Activated CD4-positive, alpha-beta T cell treated with anti-CD3 and anti-CD28 coated beads for 36 hours (primary cell): ENCODE measurements at regions of chr5 and their contacts with region 1.

Region 1: DNA sequence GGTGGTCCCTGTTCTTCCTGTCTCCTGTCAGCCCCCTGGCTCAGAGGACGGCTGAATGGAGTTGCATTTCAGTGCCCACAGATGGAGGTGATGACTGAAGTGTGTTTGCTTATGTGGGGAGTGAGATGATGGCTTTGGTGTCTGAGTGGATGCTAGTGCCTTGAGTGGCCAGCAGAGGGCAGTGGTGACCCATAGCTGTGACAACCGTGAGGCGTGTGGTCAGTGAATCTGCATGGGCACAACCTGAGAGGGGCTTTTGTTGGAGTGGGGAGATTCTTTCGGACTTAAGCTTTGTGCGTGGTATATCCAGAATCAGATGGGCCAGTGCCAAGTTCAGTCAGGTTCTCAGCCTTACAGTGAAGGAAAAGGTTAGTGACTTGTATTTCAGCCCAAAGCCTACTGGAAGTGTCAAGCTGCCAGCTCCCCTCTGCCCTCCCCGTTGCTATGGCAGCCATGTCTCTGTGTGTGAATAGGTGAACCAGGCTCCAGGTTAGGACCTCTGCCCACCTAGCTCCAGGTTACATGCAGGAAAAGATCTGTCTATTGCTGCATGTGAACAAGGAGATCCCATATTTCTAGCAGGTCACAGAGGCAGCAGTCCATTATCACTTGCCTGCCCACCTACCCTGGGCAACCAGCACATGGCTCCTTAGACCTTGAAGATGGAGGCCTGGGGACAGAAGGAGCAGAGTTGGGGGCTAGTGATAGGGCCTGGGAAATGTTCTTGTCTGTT is 14.7 kb upstream of the CXXC5 start:
- DNase-seq: peak; percentile 81
- ATAC-seq: peak; percentile 24
- H3K4me3 Mint-ChIP-seq: no peak overlapping the region
- H3K27ac Mint-ChIP-seq: peak overlapping the region; percentile 52
- H3K4me1 Mint-ChIP-seq: peaks cover 37% of the 10 kb centered on the region
- H3K27me3 Mint-ChIP-seq: no peaks in the 10 kb centered on the region

Region 2: DNA sequence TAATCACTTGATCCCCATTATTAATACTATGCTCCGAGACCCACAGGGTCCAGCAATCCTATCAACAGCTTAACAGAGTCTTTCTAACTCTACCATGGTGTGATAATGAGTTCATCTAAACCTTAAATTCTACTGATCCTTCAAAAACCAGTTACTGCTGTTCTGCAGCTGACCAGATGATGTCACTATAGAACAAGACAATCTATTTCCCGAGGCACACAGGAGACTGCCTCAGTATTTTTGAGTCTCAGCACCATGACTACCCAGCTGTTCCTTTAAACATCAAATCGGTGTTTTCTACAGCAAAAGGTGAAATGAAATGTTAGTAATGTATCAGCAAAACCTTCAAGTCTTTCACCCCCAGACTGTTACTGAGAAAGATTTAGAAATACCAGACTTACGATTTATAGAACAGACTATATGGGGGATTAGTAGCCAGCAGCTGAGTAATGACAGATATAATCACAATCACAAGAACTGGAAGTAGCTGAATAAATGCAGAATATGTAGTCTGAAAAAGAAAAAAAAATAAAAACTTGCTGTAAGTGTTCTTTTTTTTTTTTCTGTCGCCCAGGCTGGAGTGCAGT is 211.1 kb before region 1 on chr5:
- CTCF ChIA-PET with region 1: interaction called, 11 read pairs
- POLR2A ChIA-PET with region 1: no interaction called
- intact Hi-C with region 1: loop called (anchors 5 to 10 kb)
- DNase-seq: peak; percentile 66
- ATAC-seq: peak; percentile 93
- H3K4me3 Mint-ChIP-seq: no peak overlapping the region
- H3K27ac Mint-ChIP-seq: no peak overlapping the region
- H3K4me1 Mint-ChIP-seq: peaks cover 5% of the 10 kb centered on the region
- H3K27me3 Mint-ChIP-seq: no peaks in the 10 kb centered on the region

Region 3: GRCh38 chr5:139605887-139606286 is 27.6 kb before region 1 on chr5:
- CTCF ChIA-PET with region 1: interaction called, 13 read pairs
- POLR2A ChIA-PET with region 1: no interaction called
- intact Hi-C with region 1: no loop called
- DNase-seq: no peak
- ATAC-seq: no peak
- H3K4me3 Mint-ChIP-seq: no peak overlapping the region
- H3K27ac Mint-ChIP-seq: peak overlapping the region; percentile 39
- H3K4me1 Mint-ChIP-seq: peaks cover 17% of the 10 kb centered on the region
- H3K27me3 Mint-ChIP-seq: no peaks in the 10 kb centered on the region

Region 4: DNA sequence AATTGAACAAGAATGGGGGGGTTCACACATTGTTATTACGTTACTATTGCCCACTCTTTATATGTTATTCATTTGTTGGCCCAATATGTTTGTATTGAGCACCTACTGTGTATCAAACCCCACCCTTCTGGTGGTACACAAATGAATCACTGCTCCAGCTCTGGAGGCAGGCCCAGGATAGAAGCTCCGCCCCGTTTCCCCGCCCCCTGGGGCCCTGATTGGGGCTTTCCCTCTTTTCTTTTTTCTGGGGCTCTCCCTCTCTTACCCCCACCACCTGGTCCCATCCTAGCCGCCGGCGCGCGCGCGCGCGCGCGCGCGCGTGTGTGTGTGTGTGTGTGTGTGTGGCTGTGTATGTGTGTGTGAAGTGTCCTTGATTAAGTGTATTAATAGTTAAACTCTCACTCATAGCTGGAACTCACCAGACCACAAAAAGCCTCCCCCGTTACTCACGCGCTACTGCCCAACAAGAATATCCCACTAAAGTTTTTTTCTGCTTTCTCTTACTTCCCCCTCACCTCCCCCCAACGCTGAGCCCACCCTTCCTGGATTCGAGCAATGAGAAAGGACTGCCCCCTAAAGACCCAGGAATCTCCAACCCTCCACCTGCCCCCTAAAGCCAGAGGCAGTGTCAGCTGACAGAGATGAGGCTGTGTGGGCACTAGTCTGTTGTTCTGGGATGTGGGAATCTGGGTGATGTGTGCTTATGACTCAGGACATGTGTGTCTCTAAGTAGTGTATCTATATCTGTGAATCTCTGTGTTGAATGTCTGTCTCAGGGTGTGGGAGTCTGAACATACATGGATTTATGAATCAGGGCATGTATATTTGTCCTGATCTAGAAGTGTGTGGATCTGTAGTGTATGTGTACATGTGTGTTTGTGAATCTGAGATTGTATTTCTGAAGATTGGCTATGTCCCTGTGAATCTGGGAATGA is 18.7 kb after region 1 on chr5:
- CTCF ChIA-PET with region 1: interaction called, 8 read pairs
- POLR2A ChIA-PET with region 1: interaction called, 9 read pairs
- intact Hi-C with region 1: loop called (anchors 1 kb)
- DNase-seq: peak; percentile 82
- ATAC-seq: peak; percentile 64
- H3K4me3 Mint-ChIP-seq: no peak overlapping the region
- H3K27ac Mint-ChIP-seq: no peak overlapping the region
- H3K4me1 Mint-ChIP-seq: peaks cover 34% of the 10 kb centered on the region
- H3K27me3 Mint-ChIP-seq: peaks cover 40% of the 10 kb centered on the region

Region 5: GRCh38 chr5:139690064-139690802 is 56.8 kb after region 1 on chr5:
- CTCF ChIA-PET with region 1: interaction called, 17 read pairs
- POLR2A ChIA-PET with region 1: no interaction called
- intact Hi-C with region 1: loop called (anchors 1 kb)
- DNase-seq: peak; percentile 38
- ATAC-seq: peak; percentile 57
- H3K4me3 Mint-ChIP-seq: no peak overlapping the region
- H3K27ac Mint-ChIP-seq: no peak overlapping the region
- H3K4me1 Mint-ChIP-seq: no peaks in the 10 kb centered on the region
- H3K27me3 Mint-ChIP-seq: no peaks in the 10 kb centered on the region

Region 6: DNA sequence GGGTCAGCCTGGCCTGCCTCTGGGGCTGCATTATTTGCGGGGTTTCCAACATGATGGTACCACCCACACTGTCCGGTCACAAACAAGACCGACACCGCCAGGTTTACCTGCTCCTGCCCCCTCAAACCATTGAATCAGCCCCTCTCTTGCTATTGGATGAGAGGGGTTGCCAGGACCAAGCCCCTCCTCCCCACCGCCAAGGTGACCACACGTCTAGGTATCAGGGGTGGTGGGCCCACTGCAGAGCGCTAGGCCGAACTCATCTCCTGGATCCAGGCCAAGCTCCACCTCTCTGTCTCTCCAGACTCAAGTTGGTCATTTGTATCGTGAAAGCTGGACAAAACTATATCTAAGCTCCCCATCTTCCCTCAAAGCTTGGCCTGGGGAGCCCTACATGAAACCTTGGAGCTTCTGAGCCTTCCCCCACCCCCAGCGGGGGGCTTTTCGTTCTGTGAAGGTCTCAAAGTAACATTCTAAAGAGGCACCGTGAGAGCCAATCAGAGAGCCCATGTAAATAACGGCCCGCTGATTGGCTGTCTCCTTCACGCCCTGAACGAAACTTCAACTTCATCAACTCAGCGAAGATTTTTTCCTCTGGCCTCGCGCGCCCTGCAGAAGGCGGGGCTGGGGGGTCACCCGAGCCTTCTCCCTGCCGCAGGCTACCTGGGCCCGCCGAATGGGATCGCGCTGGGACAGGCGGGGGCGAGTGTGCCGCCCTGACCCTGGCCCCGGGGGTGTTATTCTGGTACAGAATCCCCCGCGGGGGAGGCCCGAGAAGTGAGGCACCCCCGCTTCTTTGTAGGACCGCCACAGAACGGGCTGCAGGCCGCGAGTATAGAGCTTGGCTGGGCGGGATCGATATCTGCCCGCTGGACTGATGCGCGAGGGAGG is 112.6 kb after region 1 on chr5:
- CTCF ChIA-PET with region 1: interaction called, 4 read pairs
- POLR2A ChIA-PET with region 1: interaction called, 4 read pairs
- intact Hi-C with region 1: loop called (anchors 5 kb)
- DNase-seq: peak; percentile 70
- ATAC-seq: peak; percentile 27
- H3K4me3 Mint-ChIP-seq: peak overlapping the region; percentile 60
- H3K27ac Mint-ChIP-seq: no peak overlapping the region
- H3K4me1 Mint-ChIP-seq: peaks cover 29% of the 10 kb centered on the region
- H3K27me3 Mint-ChIP-seq: peaks cover 16% of the 10 kb centered on the region

Region 7: GRCh38 chr5:140107312-140108083 is 474.0 kb after region 1 on chr5:
- CTCF ChIA-PET with region 1: no interaction called
- POLR2A ChIA-PET with region 1: no interaction called
- intact Hi-C with region 1: loop called in 1 of 2 experiments (anchors 5 kb)
- DNase-seq: peak; percentile 96
- ATAC-seq: peak; percentile 90
- H3K4me3 Mint-ChIP-seq: peak overlapping the region; percentile 99
- H3K27ac Mint-ChIP-seq: peak overlapping the region; percentile 95
- H3K4me1 Mint-ChIP-seq: peaks cover 43% of the 10 kb centered on the region
- H3K27me3 Mint-ChIP-seq: peaks cover 3% of the 10 kb centered on the region